ENCODE measurements at regions of chr9 and their contacts with region 1.

Region 1: GRCh38 chr9:613771-614347 is 227.6 kb upstream of the DMRT1 start:
- DNase-seq: peak; percentile 56 to 76
- ATAC-seq: peak; percentile 57

Region 2: GRCh38 chr9:763692-764524 is 150.0 kb after region 1 on chr9:
- intact Hi-C with region 1: loop called (anchors 2 to 10 kb)
- DNase-seq: peak; percentile 69 to 71
- ATAC-seq: peak; percentile 100

Region 3: GRCh38 chr9:784202-784601 is 170.3 kb after region 1 on chr9:
- intact Hi-C with region 1: no loop called
- DNase-seq: no peak
- ATAC-seq: no peak